A549 (cell line): ENCODE measurements at regions of chr22 and their contacts with region 1.

Region 1: GRCh38 chr22:27045103-27045947 is 387.9 kb downstream of the MIAT start:
- DNase-seq: peak; percentile 23 to 66
- ATAC-seq: peak; percentile 84 to 86
- H3K4me3 ChIP-seq: no peak overlapping the region
- H3K27ac ChIP-seq: peak overlapping the region; percentile 59 to 77; a peak in 5 of 6 replicates
- H3K4me1 ChIP-seq: peaks cover 22% of the 10 kb centered on the region
- CTCF ChIP-seq: no peak
- EP300 ChIP-seq: peak; percentile 22 to 31; a peak in 2 of 5 replicates
- POLR2A ChIP-seq: no peak
- RAD21 ChIP-seq: no peak; a peak in 1 of 5 replicates

Region 2: GRCh38 chr22:26897384-26897783 is 147.9 kb before region 1 on chr22:
- CTCF ChIA-PET with region 1: no interaction called
- POLR2A ChIA-PET with region 1: interaction called, 10 read pairs
- DNase-seq: no peak
- ATAC-seq: no peak
- H3K4me3 ChIP-seq: no peak overlapping the region
- H3K27ac ChIP-seq: peak overlapping the region in 1 of 2 experiments; percentile 40; a peak in 2 of 6 replicates
- H3K4me1 ChIP-seq: peaks cover 41% of the 10 kb centered on the region
- CTCF ChIP-seq: no peak
- EP300 ChIP-seq: no peak
- POLR2A ChIP-seq: no peak
- RAD21 ChIP-seq: no peak

Region 3: DNA sequence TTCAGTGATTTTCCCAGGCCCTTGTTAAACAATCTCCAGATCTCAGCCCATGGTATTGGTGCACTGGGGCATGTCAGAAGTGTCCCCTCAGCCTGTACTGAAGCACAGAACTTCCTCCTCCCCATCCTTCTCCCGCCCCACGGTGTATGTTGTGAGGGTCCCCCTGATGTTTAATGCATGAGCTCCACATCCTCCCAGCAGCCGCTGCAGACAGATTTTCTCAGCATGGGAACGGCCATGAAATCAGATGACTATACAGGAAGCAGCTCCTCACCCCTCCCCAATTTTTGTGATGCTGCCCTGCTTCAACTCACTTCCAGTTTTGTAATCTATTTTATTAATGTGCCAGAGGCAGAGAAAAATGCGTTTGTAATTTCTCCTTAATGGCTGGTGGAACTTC is 18.1 kb after region 1 on chr22:
- CTCF ChIA-PET with region 1: no interaction called
- POLR2A ChIA-PET with region 1: no interaction called
- DNase-seq: no peak
- ATAC-seq: no peak
- H3K4me3 ChIP-seq: no peak overlapping the region
- H3K27ac ChIP-seq: no peak overlapping the region
- H3K4me1 ChIP-seq: no peaks in the 10 kb centered on the region
- CTCF ChIP-seq: no peak
- EP300 ChIP-seq: no peak
- POLR2A ChIP-seq: no peak
- RAD21 ChIP-seq: no peak

Region 4: GRCh38 chr22:27075028-27075678 is 29.8 kb after region 1 on chr22:
- CTCF ChIA-PET with region 1: no interaction called
- POLR2A ChIA-PET with region 1: no interaction called
- DNase-seq: no peak
- ATAC-seq: peak in 1 of 2 experiments; percentile 56; a peak in 1 of 6 replicates
- H3K4me3 ChIP-seq: no peak overlapping the region
- H3K27ac ChIP-seq: no peak overlapping the region
- H3K4me1 ChIP-seq: no peaks in the 10 kb centered on the region
- CTCF ChIP-seq: no peak
- EP300 ChIP-seq: no peak
- POLR2A ChIP-seq: no peak
- RAD21 ChIP-seq: no peak